ENCODE measurements at regions of chr9 and their contacts with region 1.

Region 1: GRCh38 chr9:31103836-31104235 is 1280.6 kb upstream of the ACO1 start:
- DNase-seq: no peak
- ATAC-seq: no peak
- H3K4me3 ChIP-seq: no peak overlapping the region
- H3K27ac ChIP-seq: no peak overlapping the region
- H3K4me1 ChIP-seq: no peaks in the 10 kb centered on the region
- H3K27me3 ChIP-seq: no peaks in the 10 kb centered on the region
- CTCF ChIP-seq: no peak

Region 2: GRCh38 chr9:30943446-30944155 is 160.2 kb before region 1 on chr9:
- CTCF ChIA-PET with region 1: no interaction called
- POLR2A ChIA-PET with region 1: no interaction called
- in situ Hi-C with region 1: no loop called
- intact Hi-C with region 1: no loop called
- DNase-seq: no peak
- ATAC-seq: no peak
- H3K4me3 ChIP-seq: no peak overlapping the region
- H3K27ac ChIP-seq: no peak overlapping the region
- H3K4me1 ChIP-seq: no peaks in the 10 kb centered on the region
- H3K27me3 ChIP-seq: no peaks in the 10 kb centered on the region
- CTCF ChIP-seq: no peak

Region 3: GRCh38 chr9:30978000-30978399 is 125.8 kb before region 1 on chr9:
- CTCF ChIA-PET with region 1: no interaction called
- POLR2A ChIA-PET with region 1: no interaction called
- in situ Hi-C with region 1: no loop called
- intact Hi-C with region 1: no loop called
- DNase-seq: no peak
- ATAC-seq: no peak
- H3K4me3 ChIP-seq: no peak overlapping the region
- H3K27ac ChIP-seq: no peak overlapping the region
- H3K4me1 ChIP-seq: no peaks in the 10 kb centered on the region
- H3K27me3 ChIP-seq: no peaks in the 10 kb centered on the region
- CTCF ChIP-seq: no peak

Region 4: DNA sequence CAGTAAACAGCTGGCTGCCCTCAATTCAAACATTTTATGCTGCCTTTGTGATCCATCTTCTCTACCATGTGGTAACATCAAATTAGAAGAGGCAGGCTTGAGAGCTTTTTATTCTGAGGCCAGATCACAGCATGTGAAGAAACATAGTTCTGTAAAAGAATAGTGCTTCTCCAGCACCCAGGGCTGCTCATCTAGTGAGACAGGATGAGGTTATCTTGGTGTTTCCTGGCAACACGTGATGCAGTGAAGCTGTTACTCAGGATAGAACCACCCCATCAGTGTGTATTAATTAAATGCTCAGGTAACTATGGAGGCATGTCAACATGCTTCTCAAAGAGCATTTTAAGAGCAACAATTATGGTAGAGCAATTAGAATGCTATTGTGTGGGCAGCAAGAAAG is 880.1 kb after region 1 on chr9:
- CTCF ChIA-PET with region 1: no interaction called
- POLR2A ChIA-PET with region 1: interaction called, 13 read pairs
- in situ Hi-C with region 1: no loop called
- intact Hi-C with region 1: no loop called
- DNase-seq: no peak
- ATAC-seq: no peak
- H3K4me3 ChIP-seq: no peak overlapping the region
- H3K27ac ChIP-seq: no peak overlapping the region
- H3K4me1 ChIP-seq: no peaks in the 10 kb centered on the region
- H3K27me3 ChIP-seq: no peaks in the 10 kb centered on the region
- CTCF ChIP-seq: no peak